Activated T-helper 2 cell treated with anti-CD3 and anti-CD28 coated beads, Interferon-gamma antibody, Interleukin-2, Interleukin-4, amounts not matched to agents 10 μg/mL and 5 μg/mL and 100 μg/mL, durations not matched to agents 14 hours and 24 hours and 36 hours (primary cell): ENCODE measurements at regions of chr21 and their contacts with region 1.

Region 1: DNA sequence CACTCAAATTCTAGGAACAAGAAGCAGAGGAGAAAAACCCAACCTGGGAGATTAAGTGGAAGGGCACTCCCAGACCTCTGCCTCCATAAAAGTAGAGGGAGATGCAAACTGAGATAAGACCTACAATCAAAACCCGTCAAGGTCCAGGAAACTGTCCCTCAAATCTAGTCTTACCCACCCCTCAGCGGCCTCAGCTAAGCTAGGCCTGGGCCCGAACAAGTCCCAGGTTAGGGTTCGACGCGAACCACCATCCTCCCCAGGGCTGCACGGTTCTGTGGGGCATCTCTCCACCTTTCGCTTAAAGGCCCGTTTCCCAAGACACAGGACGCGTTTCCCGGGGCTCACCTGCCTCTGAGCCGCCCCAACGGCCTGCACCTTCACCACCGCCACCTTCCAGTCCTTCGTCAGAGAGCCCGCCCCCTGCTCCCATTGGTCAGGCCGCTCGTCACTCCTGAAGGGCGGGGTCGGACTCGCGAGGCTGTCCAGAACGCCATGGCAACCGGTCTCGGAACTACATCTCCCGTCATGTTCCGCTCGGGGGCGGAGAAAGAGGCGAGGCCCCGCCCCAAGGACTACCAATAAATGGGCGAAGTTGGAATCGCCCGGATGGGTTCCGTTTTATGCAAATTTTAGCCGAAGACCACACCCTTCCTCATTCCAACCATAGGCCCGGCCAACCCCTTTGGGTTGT is at the start of gene CRYZL1:
- DNase-seq: peak; percentile 100
- H3K4me3 Mint-ChIP-seq: peak within 1 kb of the TSS; percentile 94
- H3K27ac Mint-ChIP-seq: peak within 1 kb of the TSS; percentile 95
- H3K4me1 Mint-ChIP-seq: peaks cover 13% of the 10 kb centered on the region
- H3K27me3 Mint-ChIP-seq: peaks cover 22% of the 10 kb centered on the region
- total RNA-seq, gene CRYZL1: 30.4 and 36.5 TPM in 2 replicates

Region 2: GRCh38 chr21:33479679-33480480 is 161.6 kb before region 1 on chr21 and contains the start of gene TMEM50B:
- intact Hi-C with region 1: loop called (anchors 1 kb)
- DNase-seq: peak; percentile 93
- H3K4me3 Mint-ChIP-seq: peak within 1 kb of the TSS; percentile 94
- H3K27ac Mint-ChIP-seq: peak within 1 kb of the TSS; percentile 88
- H3K4me1 Mint-ChIP-seq: peaks cover 8% of the 10 kb centered on the region
- H3K27me3 Mint-ChIP-seq: no peaks in the 10 kb centered on the region
- total RNA-seq, gene TMEM50B: 16.5 and 18.7 TPM in 2 replicates

Region 3: DNA sequence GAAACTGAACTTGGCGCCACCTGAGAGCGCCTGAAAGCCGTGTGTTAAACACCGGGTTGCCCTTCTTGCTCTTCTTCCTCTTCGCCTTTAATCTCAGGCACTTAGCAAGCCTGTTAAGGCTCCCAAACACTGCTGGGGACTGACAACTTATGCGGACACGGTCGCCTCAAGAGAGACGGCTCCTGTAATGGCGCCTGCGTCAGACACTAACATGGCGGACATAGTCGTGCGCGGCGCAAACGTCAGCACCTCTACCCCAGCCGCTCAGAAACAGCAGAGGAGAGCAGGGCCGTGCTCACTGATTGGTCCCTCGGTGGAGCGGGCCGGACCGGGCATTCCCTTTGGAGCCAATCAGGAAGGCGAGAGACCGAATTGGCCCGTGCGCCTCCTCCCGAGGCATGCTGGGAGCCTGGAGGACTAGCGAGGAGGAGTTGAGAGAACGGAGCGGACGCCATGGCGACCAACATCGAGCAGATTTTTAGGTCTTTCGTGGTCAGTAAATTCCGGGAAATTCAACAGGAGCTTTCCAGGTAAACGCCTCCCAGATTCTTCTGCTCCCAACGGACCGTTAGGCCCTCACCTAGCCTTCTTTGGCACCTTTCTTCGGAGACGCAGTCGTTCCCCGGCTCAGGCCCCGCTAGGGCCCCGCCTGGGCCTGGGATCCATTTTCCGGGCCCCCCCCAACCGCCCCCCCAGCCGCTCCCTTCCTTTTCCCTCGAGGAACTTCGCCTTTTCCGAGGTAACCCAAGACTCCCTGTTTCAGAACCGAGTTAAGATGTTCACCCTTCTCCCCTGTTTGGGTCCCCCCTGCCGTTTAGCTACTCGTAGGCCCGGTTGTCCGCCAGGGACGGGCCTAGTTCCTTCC is 98.6 kb before region 1 on chr21 and contains the start of gene SON:
- intact Hi-C with region 1: loop called (anchors 1 kb)
- DNase-seq: peak; percentile 98
- H3K4me3 Mint-ChIP-seq: peak within 1 kb of the TSS; percentile 95
- H3K27ac Mint-ChIP-seq: peak within 1 kb of the TSS; percentile 100
- H3K4me1 Mint-ChIP-seq: peaks cover 31% of the 10 kb centered on the region
- H3K27me3 Mint-ChIP-seq: no peaks in the 10 kb centered on the region
- total RNA-seq, gene SON: 345 and 376 TPM in 2 replicates

Region 4: DNA sequence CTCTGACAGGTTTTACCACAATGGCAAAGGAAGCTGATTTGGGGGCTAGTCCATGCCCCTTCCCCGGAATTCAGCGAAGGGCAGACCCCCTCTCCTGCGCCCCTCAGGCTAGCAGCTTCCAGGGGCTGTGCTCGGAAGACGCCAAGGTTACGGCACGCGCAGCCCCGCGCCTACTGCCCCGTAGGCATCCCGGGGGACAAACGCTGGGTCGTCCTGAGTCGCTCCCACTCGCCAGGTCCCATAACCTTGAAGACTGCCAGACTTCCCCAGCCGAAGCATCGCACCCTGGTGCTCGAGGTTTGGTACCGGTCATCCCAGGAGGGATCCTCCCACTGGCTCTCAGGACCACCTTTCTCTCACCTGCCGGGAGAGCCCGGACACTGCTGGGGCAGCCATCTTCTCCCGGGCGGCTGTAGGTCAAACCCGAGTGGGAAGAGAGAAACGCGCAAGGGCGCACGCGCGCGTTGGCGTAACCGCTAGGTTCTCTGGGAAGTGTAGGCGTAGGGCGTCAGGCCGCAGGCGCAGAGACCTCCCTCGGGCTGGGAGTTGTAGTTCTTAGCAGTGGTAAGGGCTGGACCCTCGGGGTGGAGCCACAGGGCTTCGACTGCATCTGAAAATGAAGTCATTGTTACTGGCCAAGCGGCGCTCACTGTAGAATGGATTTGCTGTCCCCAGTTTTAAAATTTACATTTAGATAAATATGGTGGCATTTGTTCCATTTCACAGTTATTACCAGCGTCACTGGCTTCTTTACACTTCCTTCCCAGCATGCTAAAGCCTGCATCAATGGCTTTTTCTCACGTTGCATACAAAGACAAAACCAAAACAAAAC is 274.1 kb after region 1 on chr21 and contains the start of gene ATP5PO:
- intact Hi-C with region 1: loop called (anchors 1 kb)
- DNase-seq: peak; percentile 97
- H3K4me3 Mint-ChIP-seq: peak within 1 kb of the TSS; percentile 99
- H3K27ac Mint-ChIP-seq: peak within 1 kb of the TSS; percentile 98
- H3K4me1 Mint-ChIP-seq: peaks cover 30% of the 10 kb centered on the region
- H3K27me3 Mint-ChIP-seq: no peaks in the 10 kb centered on the region
- total RNA-seq, gene ATP5PO: 185 and 186 TPM in 2 replicates

Region 5: DNA sequence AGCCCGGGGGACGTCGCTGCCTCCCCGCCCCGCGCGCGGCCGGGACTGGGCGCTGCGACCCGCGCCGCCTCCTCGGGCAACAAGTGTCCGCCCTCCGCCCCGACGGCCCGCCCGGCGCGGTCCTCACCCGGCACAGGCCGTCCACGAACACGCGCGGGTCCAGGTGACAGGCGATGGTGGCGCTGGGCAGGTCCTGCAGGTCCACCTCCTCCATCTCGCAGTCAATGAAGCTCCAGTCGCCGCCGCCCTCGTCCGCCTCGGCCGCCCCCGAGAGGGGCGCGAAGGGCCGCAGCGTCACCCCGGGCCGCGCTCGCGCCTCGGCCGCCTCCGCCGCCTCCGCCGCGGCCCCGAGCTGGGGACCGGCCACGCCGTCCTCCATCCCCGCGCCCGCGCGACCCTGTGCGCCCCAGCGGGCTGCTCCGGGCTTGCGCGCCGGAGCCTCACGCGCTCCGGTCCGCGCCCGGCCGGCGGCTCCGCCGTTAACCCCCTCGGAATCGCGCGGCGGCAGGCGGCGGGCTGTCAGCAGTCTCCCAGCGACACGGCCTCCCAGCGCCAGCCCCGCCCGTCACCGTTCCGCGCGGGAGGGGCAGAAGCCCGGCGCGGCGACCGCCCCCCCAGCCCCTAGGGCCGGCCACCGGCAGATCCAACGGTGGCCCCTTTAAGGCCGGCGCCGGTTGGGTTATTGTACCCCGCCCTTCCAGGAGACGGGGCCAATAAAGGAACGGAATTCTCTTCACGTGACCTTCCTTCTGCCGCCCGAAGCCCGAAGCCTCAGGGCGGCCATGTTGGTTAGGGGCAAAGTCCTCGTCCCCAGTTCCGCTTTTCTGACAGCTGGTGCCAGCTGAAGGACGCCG is 973.4 kb after region 1 on chr21 and contains the start of gene RCAN1:
- intact Hi-C with region 1: loop called (anchors 10 kb)
- DNase-seq: peak; percentile 85
- H3K4me3 Mint-ChIP-seq: peak within 1 kb of the TSS; percentile 85
- H3K27ac Mint-ChIP-seq: peak within 1 kb of the TSS; percentile 13
- H3K4me1 Mint-ChIP-seq: peaks cover 17% of the 10 kb centered on the region
- H3K27me3 Mint-ChIP-seq: peaks cover 19% of the 10 kb centered on the region
- total RNA-seq, gene RCAN1: 21.1 and 21.8 TPM in 2 replicates